Transverse colon (tissue), 4 donors: ENCODE measurements at regions of chr7 and their contacts with region 1.

Region 1: GRCh38 chr7:40232242-40232893 is 97.6 kb downstream of the SUGCT start:
- DNase-seq: peak; percentile 14
- H3K4me3 ChIP-seq: no peak overlapping the region
- H3K27ac ChIP-seq: no peak overlapping the region
- H3K4me1 ChIP-seq: peaks cover 0 to 22% (median 8%) of the 10 kb centered on the region in 4 donors
- H3K27me3 ChIP-seq: no peaks in the 10 kb centered on the region
- CTCF ChIP-seq: peak; percentile 31 to 64 (median 49)
- EP300 ChIP-seq: no peak
- POLR2A ChIP-seq: no peak

Region 2: DNA sequence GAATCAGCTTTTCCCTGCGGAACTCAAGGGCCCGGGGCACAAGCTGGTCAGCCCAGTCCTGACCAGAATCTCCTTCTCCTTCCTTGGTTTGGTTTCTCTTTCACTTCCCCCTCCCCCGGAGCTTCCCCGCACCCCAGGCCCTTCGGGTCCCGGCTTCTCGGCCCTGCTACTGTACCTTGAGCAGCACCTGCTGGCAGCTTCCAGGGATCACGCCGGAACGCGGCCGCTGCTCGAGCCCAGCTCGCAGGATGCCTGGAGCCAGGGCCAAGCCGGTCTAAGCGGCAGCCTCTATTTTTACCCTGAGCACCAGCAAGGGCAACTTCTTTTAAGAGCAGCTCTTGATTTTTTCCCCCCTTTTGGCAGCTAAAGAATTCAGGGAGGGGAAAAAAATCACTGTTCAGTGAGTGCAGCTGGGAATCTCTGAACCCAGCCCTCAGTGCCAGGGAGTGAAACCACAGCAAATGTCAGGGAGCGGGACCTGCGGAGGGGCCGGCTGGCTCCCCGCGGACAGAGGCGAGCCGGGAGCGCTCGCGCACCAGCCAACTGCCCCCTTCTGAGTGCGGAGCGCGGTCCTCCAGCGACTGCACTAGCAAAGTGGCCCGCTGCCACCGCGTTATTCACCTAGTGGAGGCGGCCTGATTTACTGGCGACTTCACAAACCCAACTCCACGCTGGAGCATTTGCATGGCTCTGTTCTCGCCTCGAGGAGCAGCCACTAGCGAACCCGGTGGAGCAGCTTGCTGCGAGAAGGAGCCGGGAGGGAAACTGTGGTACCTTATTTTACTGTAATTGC is 1472.9 kb after region 1 on chr7:
- in situ Hi-C with region 1: loop called in 1 of 4 experiments (anchors 25 kb)
- intact Hi-C with region 1: no loop called
- DNase-seq: peak; percentile 90
- H3K4me3 ChIP-seq: peak overlapping the region; percentile 9 to 59 (median 41)
- H3K27ac ChIP-seq: peak overlapping the region; percentile 70 to 81 (median 80)
- H3K4me1 ChIP-seq: peaks cover 0 to 12% (median 8%) of the 10 kb centered on the region in 4 donors
- H3K27me3 ChIP-seq: no peaks in the 10 kb centered on the region
- CTCF ChIP-seq: peak; percentile 59 to 85 (median 71)
- EP300 ChIP-seq: no peak
- POLR2A ChIP-seq: no peak